ENCODE measurements at regions of chr4 and their contacts with region 1.

Region 1: DNA sequence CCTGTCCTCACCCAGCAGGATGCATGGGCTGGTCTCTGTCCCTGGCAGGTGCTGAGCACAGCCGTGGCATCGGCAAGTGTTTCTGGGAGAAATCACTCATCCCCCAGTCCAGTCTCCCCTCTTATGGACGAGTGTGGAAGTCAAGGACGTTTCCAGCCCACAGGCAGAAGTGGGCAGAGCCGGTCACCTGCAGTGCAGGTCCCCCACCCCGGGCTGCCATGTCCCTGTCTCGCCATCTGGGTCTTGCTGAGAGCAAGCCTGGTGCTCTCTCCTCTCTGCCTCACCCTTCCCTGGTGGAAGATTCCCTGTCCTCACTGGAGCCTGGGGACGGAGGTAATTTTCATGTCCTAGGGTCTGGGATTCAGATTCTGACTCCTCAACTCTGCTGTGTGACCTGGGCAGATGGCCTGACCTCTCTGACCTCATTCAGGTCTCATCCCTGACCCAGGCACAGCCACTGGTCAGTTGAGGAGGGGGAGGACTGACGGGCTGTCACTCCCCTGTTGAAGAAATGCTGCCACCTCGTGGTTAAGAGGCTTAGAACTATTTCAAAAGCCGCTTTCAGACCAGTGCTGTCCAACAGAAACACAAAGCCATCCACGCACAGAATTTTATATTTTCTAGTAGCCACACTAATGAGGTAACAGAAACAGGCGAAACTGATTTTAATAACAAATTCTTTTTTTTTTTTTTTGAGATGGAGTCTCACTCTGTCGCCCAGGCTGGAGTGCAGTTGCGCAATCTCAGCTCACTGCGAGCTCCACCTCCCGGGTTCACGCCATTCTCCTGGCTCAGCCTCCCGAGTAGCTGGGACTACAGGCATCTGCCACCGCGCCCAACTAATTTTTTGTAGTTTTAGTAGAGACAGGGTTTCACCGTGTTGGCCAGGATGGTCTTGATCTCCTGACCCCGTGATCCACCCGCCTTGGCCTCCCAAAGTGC is 1.8 kb downstream of the CPZ start:
- DNase-seq: peak; percentile 62 to 73
- H3K4me3 ChIP-seq: no peak overlapping the region
- H3K27ac ChIP-seq: no peak overlapping the region
- H3K4me1 ChIP-seq: peaks cover 11 to 34% of the 10 kb centered on the region in 2 donors
- H3K27me3 ChIP-seq: no peaks in the 10 kb centered on the region
- CTCF ChIP-seq: peak; percentile 49 to 83 (median 68)
- POLR2A ChIP-seq: no peak

Region 2: DNA sequence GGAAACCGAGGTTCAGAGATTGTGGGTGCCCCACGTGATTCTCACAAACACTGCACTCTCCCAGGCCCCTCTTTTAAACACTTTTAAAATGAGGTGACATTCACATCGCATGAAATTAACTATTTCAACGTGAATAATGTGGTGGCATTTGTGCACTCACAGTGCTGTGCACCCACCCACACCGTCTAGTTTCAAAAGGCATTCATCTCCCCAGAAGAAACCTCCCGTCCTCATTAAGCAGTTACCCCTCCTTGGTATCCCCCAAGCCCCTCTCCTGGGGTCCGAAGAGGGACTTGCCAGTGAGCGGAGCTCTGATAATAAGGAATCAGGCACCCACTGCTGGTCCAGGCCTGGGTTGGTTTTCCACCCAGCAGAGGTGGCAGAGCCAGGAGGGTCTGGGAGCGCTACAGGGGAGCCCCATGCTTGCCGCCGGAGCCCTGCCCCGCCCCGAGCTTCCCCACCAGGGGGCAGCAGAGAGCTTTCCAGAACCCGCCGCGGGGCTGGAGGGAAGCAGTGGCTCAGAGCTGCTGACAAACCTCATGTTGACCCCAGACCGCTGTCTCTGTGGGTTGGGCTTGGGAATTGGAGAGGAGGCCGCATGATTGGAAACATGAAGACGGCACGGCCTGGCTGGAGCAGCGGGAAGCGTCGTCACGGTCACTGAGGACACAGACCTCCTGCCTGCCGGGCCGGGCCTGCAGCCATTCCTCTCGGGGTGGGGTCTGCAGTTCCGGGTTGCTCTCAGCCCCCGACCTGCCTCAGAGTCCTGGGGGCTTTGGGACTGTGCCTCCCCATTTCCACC is 352.3 kb before region 1 on chr4:
- intact Hi-C with region 1: loop called (anchors 10 kb)
- DNase-seq: peak; percentile 80 to 84
- H3K4me3 ChIP-seq: no peak overlapping the region
- H3K27ac ChIP-seq: peak overlapping the region in 1 of 3 donors; percentile 22
- H3K4me1 ChIP-seq: peaks cover 18 to 26% of the 10 kb centered on the region in 2 donors
- H3K27me3 ChIP-seq: no peaks in the 10 kb centered on the region
- CTCF ChIP-seq: peak; percentile 88 to 98 (median 93)
- POLR2A ChIP-seq: no peak